Activated CD4-positive, alpha-beta memory T cell treated with anti-CD3 and anti-CD28 coated beads, Interleukin-2, amount 10 ng/mL, durations not matched to agents 7 days and 5 days (primary cell): ENCODE measurements at regions of chr18 and their contacts with region 1.

Region 1: DNA sequence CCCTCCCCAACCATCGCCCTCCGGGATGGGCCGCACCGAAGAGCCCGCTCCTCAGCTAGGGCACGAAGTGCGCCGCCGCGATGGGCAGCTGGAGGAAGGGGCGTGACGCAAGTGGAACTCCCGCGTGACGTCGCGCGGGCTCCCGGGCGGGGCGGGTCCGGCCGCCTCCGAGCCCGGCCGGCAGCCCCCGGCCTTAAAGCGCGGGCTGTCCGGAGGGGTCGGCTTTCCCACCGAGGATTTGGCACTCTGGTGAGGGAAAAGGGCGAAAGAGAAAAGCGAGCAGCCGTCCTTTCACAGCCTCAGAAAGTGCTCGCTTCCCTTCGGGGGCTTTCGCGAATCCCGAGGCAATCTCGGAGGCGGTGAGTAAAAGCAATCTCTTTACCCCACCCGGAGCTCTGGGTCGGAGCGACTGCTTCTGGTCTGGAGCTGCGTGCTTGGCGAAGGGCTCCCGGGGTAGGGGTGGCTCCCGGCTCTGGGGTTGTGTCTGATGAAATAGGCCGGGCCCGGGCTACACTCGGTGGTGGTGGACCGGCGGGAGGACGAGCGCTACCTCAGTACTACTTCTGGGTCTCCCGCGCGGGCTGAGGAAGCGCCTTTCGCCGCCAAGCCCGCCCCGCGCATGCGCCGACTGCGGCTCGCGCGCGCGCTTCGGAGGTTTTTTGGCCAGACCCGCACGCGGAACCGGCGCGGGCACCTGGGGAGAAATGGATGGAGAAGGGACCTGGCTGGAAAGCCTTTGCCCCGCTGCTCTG is at the start of gene RBBP8:
- DNase-seq: peak; percentile 86
- H3K4me3 Mint-ChIP-seq: peak within 1 kb of the TSS; percentile 85
- H3K27ac Mint-ChIP-seq: peak within 1 kb of the TSS; percentile 78
- H3K4me1 Mint-ChIP-seq: peaks cover 44% of the 10 kb centered on the region
- H3K27me3 Mint-ChIP-seq: peaks cover 3% of the 10 kb centered on the region
- total RNA-seq, gene RBBP8: 55.0 to 55.9 TPM

Region 2: GRCh38 chr18:22977847-22978701 is 44.7 kb after region 1 on chr18:
- CTCF ChIA-PET with region 1: interaction called, 29 read pairs
- POLR2A ChIA-PET with region 1: interaction called, 15 read pairs
- DNase-seq: no peak
- H3K4me3 Mint-ChIP-seq: no peak overlapping the region
- H3K27ac Mint-ChIP-seq: peak overlapping the region; percentile 38
- H3K4me1 Mint-ChIP-seq: peaks cover 24% of the 10 kb centered on the region
- H3K27me3 Mint-ChIP-seq: no peaks in the 10 kb centered on the region

Region 3: DNA sequence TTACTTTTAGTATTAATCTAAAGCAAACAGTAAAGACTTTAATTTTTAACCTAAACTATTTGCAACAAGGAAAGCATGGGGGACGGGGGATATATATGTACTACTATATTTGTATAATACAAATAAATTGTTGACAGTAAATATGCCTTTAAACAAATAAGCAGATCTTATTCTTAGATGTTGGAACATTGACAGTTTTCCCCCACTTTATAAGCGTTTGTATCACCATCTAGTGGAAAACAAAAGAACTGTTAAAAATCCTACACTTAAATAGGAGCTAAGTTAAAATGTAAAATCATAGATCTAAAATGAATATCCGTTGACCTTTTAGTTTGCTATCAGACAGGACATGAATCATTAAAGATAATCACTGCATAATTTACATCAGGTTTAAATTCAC is 49.8 kb after region 1 on chr18:
- CTCF ChIA-PET with region 1: interaction called, 29 read pairs
- POLR2A ChIA-PET with region 1: interaction called, 15 read pairs
- DNase-seq: no peak
- H3K4me3 Mint-ChIP-seq: no peak overlapping the region
- H3K27ac Mint-ChIP-seq: no peak overlapping the region
- H3K4me1 Mint-ChIP-seq: peaks cover 13% of the 10 kb centered on the region
- H3K27me3 Mint-ChIP-seq: no peaks in the 10 kb centered on the region